Left lung (tissue), 14 donors: ENCODE measurements at regions of chr10 and their contacts with region 1.

Region 1: DNA sequence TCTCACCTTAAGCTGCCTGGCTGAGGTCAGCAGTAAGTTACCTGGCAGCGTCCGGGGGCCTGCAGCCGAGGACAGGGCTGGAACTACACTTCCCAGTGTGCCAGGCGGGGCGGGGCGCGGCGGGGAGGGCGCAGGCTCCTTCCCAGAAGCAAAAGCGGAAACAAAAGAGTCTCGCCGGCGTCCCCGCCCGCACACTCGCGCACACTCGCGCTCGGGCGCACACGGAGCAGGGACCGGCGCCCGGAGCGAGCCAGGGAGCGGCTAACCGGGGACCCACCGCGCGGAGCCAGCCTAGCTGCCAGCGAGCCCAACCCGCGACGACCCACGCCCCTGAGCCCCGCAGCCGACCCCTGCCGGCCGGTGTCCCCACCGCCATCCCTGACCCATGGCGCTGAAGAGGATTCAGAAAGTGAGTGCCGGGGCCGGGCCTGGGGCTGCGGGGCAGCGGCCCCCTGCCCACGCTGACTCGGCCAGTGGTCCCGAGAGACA is at the start of gene UBE2D1:
- DNase-seq: peak; percentile 64 to 99 (median 88)
- ATAC-seq: peak; percentile 98
- H3K4me3 ChIP-seq: peak within 1 kb of the TSS; percentile 86 to 89
- H3K27ac ChIP-seq: peak within 1 kb of the TSS; percentile 81 to 91
- H3K4me1 ChIP-seq: peaks cover 0 to 48% of the 10 kb centered on the region in 2 donors
- H3K27me3 ChIP-seq: no peaks in the 10 kb centered on the region
- CTCF ChIP-seq: peak in 1 of 2 donors; percentile 61
- polyA plus RNA-seq, gene UBE2D1: 30.3 to 34.8 (median 33.0) TPM

Region 2: DNA sequence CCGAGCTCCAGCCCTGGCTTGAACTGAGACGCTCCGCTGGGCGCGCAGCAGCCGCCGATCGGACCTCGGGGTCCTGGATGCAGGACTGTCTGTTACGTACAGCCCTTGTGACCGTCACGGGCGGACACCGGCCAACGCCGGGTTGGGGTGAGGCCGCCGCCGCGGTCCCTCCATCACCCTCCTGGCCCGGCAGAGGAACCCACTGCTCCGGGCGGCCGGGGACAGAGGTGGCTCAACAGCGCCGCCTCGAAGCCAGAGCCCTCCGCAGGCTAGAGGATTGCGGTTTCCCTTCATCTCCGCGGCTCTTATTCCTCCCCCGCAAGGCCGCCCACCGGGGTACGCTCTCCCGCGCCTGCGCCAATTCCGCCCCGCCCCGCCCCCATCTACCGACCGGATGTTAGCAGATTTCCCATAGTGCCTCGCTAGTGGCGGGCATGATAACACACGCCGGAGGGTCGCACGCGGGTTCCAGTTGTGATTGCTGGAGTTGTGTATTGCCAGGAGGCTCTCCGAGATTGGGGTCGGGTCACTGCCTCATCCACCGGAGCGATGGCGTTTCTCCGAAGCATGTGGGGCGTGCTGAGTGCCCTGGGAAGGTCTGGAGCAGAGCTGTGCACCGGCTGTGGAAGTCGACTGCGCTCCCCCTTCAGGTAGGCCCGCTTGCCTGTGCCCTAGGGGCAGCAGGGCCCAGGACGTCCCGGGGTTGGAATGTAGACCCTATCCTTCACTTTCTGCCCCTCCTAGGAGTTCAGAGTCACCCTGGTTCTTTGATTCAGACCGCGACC is 50.3 kb after region 1 on chr10 and contains the start of gene TFAM:
- intact Hi-C with region 1: loop called in 1 of 2 experiments (anchors 10 kb)
- DNase-seq: peak; percentile 95 to 96 (median 96)
- ATAC-seq: peak; percentile 97
- H3K4me3 ChIP-seq: peak within 1 kb of the TSS; percentile 80 to 89
- H3K27ac ChIP-seq: peak within 1 kb of the TSS; percentile 87 to 94
- H3K4me1 ChIP-seq: peaks cover 8 to 44% of the 10 kb centered on the region in 2 donors
- H3K27me3 ChIP-seq: no peaks in the 10 kb centered on the region
- CTCF ChIP-seq: peak in 1 of 2 donors; percentile 32
- polyA plus RNA-seq, gene TFAM: 58.0 to 68.4 (median 62.7) TPM